ENCODE measurements at regions of chr14 and their contacts with region 1.

Region 1: DNA sequence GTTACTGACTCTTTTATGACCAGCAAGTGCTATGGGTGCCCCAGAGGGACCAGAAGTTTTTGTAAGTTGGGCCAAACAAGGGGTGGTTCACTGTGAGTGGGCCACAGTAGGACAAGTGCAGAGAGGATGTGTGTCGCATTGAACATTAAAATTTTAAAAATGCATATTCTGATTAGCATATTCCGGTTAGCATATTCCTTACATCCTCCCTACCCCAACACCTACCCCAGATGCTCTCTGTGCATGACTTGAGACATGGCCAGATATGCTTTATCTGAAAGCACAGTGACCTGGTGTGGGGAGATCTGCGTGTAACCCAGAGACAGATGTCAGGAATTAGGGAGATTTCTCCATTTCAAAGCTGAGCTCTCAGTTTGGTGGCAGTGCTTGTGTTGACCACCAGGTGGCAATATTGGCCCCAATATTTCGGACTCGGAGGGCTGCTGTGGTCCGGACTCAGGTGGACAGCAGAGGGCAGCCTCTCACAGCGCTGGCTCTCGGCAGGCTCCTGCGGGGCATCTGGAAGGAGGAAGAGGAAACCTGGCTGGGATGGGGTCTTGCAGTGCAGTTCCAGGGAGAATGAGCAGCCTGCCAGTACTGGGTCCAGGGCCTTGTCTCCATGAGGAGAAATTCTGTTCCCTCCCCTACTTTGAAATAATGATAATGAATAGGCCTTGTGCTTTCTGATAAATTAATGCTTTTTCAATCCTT is 1.6 kb upstream of the CEBPE start:
- ATAC-seq: peak; percentile 55 to 99 (median 94)
- H3K4me3 ChIP-seq: no peak overlapping the region
- H3K27ac ChIP-seq: no peak overlapping the region
- H3K4me1 ChIP-seq: peaks cover 6 to 7% of the 10 kb centered on the region in 2 donors

Region 2: DNA sequence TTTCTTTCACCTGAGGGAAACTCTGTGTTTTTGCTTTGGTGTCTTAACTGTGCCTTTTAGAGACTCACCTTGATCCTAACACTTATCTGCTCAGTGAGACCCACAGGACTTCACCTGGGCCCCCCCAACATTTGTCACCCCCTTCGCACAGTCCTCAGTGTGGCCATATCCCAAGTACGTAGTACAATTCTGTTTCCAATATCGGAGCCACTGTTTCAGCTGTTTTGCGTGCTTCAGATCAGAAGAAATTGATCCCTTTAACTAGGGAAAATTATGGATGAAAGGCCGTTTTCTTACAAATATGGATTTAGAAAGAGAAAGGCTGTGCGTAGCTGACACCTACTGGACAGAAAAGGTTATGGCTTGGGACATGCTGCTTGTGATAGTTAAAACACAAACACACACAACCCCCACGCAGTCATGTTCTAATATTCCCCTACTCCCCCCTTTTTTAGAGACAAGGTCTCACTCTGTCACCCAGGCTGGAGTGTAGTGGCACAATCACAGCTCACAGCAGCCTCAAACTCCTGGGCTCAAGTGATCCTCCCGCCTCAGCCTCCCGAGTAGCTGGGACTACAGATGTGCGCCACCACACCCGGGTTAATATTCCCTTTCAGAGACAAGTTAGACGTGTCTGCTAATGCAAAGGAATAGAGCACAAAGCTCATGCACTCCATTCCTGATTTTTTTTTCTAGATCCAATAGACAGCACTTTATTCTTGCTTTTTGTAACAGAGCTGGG is 66.4 kb after region 1 on chr14:
- in situ Hi-C with region 1: loop called in 5 of 9 experiments (anchors 5 to 10 kb)
- ATAC-seq: peak in 6 of 8 experiments; percentile 19 to 62 (median 30)
- H3K4me3 ChIP-seq: no peak overlapping the region
- H3K27ac ChIP-seq: no peak overlapping the region
- H3K4me1 ChIP-seq: no peaks in the 10 kb centered on the region